PC-3 (cell line): ENCODE measurements at regions of chr10 and their contacts with region 1.

Region 1: GRCh38 chr10:14782691-14783363 is 8.1 kb upstream of the FAM107B start:
- DNase-seq: peak; percentile 85
- ATAC-seq: peak; percentile 81
- H3K4me3 ChIP-seq: no peak overlapping the region
- H3K27ac ChIP-seq: peak overlapping the region; percentile 94
- H3K4me1 ChIP-seq: peaks cover 47% of the 10 kb centered on the region
- H3K27me3 ChIP-seq: no peaks in the 10 kb centered on the region
- CTCF ChIP-seq: no peak

Region 2: DNA sequence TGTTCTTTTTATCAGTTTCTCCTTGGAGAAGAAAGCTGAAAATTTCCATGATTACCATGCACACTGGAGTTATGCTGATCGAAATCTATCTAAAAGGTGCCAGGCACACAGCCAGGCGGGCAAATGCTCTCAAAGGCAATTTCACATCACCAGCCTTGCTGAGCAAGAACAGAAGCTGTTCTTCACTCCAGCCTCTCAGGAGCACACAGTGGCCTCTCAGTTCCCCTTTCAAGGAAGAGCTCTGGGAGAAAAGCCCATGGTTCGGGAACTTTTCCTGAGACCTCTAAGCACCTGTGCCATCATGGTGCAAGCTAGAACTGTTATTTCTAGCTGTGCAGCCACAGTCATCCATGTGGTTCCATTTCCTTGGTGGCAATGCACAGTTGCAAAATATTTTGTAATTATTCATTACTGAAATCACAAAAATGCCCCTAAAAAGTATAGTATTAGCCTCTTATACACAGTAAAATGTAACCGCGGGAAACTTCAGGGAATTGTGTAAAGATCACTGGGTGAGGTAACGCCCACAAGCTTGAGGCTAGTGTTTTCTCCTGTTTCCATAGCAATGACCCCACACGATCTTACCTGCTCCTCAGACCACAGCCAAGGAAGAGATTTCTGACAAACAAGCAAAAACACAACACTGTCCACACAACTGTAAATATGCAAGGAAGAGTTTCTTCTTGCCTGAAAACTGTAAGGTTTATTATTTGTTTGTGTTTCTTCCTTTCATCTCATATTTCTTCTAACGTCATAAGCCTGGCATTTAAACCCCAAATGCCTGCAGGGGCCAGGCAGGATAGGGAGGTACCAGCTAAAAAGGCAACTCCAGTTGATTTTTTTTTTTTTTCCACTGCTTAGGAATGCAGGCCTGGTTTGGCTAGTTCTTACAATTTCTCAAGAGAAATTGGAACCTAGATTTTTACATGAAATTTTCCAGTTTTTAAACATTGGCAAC is 129.3 kb before region 1 on chr10:
- CTCF ChIA-PET with region 1: no interaction called
- POLR2A ChIA-PET with region 1: no interaction called
- intact Hi-C with region 1: loop called (anchors 1 kb)
- DNase-seq: peak; percentile 79
- ATAC-seq: peak; percentile 65
- H3K4me3 ChIP-seq: peak overlapping the region; percentile 24; the same call in 1 of the 2 replicates
- H3K27ac ChIP-seq: peak overlapping the region; percentile 90
- H3K4me1 ChIP-seq: peaks cover 35% of the 10 kb centered on the region
- H3K27me3 ChIP-seq: no peaks in the 10 kb centered on the region
- CTCF ChIP-seq: no peak

Region 3: GRCh38 chr10:14670551-14671240 is 112.1 kb before region 1 on chr10:
- CTCF ChIA-PET with region 1: no interaction called
- POLR2A ChIA-PET with region 1: no interaction called
- intact Hi-C with region 1: loop called (anchors 5 kb)
- DNase-seq: peak; percentile 57
- ATAC-seq: peak; percentile 87
- H3K4me3 ChIP-seq: peak overlapping the region; percentile 65
- H3K27ac ChIP-seq: peak overlapping the region; percentile 99
- H3K4me1 ChIP-seq: peaks cover 27% of the 10 kb centered on the region
- H3K27me3 ChIP-seq: no peaks in the 10 kb centered on the region
- CTCF ChIP-seq: no peak